Activated CD4-positive, alpha-beta memory T cell treated with anti-CD3 and anti-CD28 coated beads for 36 hours (primary cell): ENCODE measurements at regions of chr11 and their contacts with region 1.

Region 1: DNA sequence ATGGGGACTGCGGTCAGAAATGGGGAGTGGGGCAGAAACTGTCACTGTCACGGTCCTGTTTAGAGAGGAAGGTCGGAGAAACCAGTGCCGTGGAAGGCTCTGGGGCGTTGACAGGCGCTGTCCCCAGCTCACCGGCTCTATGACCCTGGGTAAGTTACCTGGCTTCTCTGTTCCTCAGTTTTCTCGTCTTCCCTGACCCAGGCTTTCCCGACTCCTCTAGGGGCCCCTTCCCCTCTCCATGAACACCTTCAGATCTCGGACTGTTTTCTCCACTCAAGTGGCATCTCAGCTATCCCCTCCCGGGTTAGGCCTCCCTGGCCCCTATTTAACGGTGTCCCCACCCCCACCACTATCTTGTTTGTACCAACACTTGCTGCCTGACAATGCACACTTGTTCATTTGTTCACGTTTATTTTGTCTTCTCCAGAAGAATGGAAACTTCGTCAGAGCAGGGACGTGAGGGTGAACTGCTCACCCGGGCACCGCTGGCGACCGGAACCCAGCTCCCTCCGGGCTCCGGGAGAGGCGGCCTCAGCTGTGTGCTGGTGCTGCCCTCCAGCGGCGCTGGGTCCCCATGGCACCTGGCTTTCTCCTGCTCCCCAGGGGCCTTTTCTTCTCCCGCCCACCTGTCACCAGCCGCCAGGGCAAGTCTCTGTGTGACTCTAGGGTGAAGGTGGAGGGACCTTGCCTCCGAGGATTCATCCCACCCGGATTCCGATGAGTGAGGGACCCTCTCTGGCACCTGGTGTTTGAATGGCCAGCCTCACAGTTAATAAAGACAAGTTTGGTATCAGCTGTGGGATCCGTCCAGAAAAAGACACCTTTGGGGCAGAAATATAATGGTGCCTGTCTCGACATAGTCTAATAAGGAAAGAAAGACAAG is 33.1 kb upstream of the SLC35C1 start:
- DNase-seq: peak; percentile 92
- H3K4me3 Mint-ChIP-seq: peak overlapping the region; percentile 86
- H3K27ac Mint-ChIP-seq: peak overlapping the region; percentile 35
- H3K4me1 Mint-ChIP-seq: peaks cover 24% of the 10 kb centered on the region
- H3K27me3 Mint-ChIP-seq: no peaks in the 10 kb centered on the region

Region 2: GRCh38 chr11:44936525-44936924 is 835.3 kb before region 1 on chr11:
- CTCF ChIA-PET with region 1: no interaction called
- POLR2A ChIA-PET with region 1: no interaction called
- intact Hi-C with region 1: loop called (anchors 10 kb)
- DNase-seq: peak; percentile 89
- H3K4me3 Mint-ChIP-seq: no peak overlapping the region
- H3K27ac Mint-ChIP-seq: no peak overlapping the region
- H3K4me1 Mint-ChIP-seq: no peaks in the 10 kb centered on the region
- H3K27me3 Mint-ChIP-seq: no peaks in the 10 kb centered on the region

Region 3: GRCh38 chr11:45371251-45372115 is 400.3 kb before region 1 on chr11:
- CTCF ChIA-PET with region 1: interaction called, 78 read pairs
- POLR2A ChIA-PET with region 1: no interaction called
- intact Hi-C with region 1: loop called (anchors 1 kb)
- DNase-seq: peak; percentile 81
- H3K4me3 Mint-ChIP-seq: no peak overlapping the region
- H3K27ac Mint-ChIP-seq: no peak overlapping the region
- H3K4me1 Mint-ChIP-seq: peaks cover 21% of the 10 kb centered on the region
- H3K27me3 Mint-ChIP-seq: peaks cover 3% of the 10 kb centered on the region

Region 4: GRCh38 chr11:45736424-45736823 is 35.4 kb before region 1 on chr11:
- CTCF ChIA-PET with region 1: interaction called, 6 read pairs
- POLR2A ChIA-PET with region 1: no interaction called
- intact Hi-C with region 1: loop called (anchors 2 kb)
- DNase-seq: no peak
- H3K4me3 Mint-ChIP-seq: no peak overlapping the region
- H3K27ac Mint-ChIP-seq: no peak overlapping the region
- H3K4me1 Mint-ChIP-seq: peaks cover 7% of the 10 kb centered on the region
- H3K27me3 Mint-ChIP-seq: peaks cover 5% of the 10 kb centered on the region

Region 5: GRCh38 chr11:45804761-45805304 is 33.0 kb after region 1 on chr11 and contains the start of gene SLC35C1:
- CTCF ChIA-PET with region 1: interaction called, 49 read pairs
- POLR2A ChIA-PET with region 1: no interaction called
- intact Hi-C with region 1: loop called (anchors 1 kb)
- DNase-seq: peak; percentile 97
- H3K4me3 Mint-ChIP-seq: peak within 1 kb of the TSS; percentile 90
- H3K27ac Mint-ChIP-seq: peak within 1 kb of the TSS; percentile 86
- H3K4me1 Mint-ChIP-seq: peaks cover 42% of the 10 kb centered on the region
- H3K27me3 Mint-ChIP-seq: no peaks in the 10 kb centered on the region
- total RNA-seq, gene SLC35C1: 10.7 to 11.4 TPM

Region 6: DNA sequence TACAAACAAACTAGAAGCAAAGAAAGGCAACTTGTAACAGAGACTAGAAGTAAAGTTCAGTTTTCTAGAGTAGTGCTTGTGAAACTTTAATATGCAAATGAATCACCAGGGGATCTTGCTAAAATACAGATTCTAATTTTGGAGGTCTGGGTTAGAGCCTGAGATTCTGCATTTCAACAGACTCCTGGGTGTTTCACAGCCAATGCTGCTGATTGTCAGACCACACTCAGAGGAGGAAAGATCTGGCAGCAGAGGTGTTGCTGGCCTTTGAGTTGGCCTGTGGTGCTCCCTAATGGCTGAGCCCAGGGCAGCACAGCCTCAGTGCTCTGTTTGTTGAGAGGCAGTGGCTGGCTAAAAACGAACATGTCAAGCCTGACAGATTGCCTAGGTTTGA is 80.9 kb after region 1 on chr11:
- CTCF ChIA-PET with region 1: no interaction called
- POLR2A ChIA-PET with region 1: no interaction called
- intact Hi-C with region 1: no loop called
- DNase-seq: no peak
- H3K4me3 Mint-ChIP-seq: no peak overlapping the region
- H3K27ac Mint-ChIP-seq: no peak overlapping the region
- H3K4me1 Mint-ChIP-seq: peaks cover 38% of the 10 kb centered on the region
- H3K27me3 Mint-ChIP-seq: no peaks in the 10 kb centered on the region

Region 7: DNA sequence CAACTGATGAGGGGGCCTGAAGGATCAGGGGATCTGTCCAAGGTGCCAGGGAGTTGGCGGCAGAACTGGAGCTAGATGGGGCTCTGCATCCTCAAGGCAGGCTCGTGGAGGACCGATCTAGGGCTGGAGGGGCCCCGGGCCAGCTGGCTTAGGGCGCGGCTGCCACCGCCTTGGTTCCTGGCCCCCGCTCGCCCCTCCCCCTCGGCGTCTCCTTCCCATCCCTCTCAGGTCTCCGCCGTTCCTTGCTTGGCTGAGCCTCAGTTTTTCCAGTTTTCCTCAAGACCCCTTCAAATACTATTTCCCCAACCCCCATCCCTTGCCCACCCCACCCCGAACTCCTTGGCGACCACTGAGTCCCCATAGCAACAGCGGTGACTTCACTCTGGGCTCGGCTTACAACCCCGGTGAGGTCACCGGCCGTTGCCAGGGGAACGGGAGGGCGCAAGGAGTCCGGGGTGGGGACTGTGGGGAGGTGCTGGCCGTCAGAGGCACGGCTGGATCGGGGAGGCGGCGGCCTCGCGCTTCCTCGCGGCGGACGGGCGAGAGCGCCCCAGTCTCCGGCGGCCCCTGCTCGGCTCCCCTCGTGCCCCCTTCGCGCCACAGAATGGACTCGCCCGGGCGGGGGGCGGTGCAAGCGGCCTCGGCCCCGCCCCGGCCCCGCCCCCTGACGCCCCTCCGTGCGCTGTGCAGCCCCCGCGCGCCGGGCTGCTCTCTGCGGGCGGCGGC is 127.8 kb after region 1 on chr11:
- CTCF ChIA-PET with region 1: no interaction called
- POLR2A ChIA-PET with region 1: no interaction called
- intact Hi-C with region 1: no loop called
- DNase-seq: peak; percentile 75
- H3K4me3 Mint-ChIP-seq: peak overlapping the region; percentile 37
- H3K27ac Mint-ChIP-seq: no peak overlapping the region
- H3K4me1 Mint-ChIP-seq: no peaks in the 10 kb centered on the region
- H3K27me3 Mint-ChIP-seq: peaks cover 18% of the 10 kb centered on the region

Region 8: GRCh38 chr11:46006418-46007070 is 234.7 kb after region 1 on chr11:
- CTCF ChIA-PET with region 1: interaction called, 8 read pairs
- POLR2A ChIA-PET with region 1: no interaction called
- intact Hi-C with region 1: loop called (anchors 2 kb)
- DNase-seq: no peak
- H3K4me3 Mint-ChIP-seq: no peak overlapping the region
- H3K27ac Mint-ChIP-seq: no peak overlapping the region
- H3K4me1 Mint-ChIP-seq: peaks cover 2% of the 10 kb centered on the region
- H3K27me3 Mint-ChIP-seq: no peaks in the 10 kb centered on the region

Region 9: GRCh38 chr11:46120361-46121300 is 348.8 kb after region 1 on chr11:
- CTCF ChIA-PET with region 1: no interaction called
- POLR2A ChIA-PET with region 1: no interaction called
- intact Hi-C with region 1: no loop called
- DNase-seq: peak; percentile 30
- H3K4me3 Mint-ChIP-seq: peak overlapping the region; percentile 88
- H3K27ac Mint-ChIP-seq: peak overlapping the region; percentile 94
- H3K4me1 Mint-ChIP-seq: peaks cover 41% of the 10 kb centered on the region
- H3K27me3 Mint-ChIP-seq: no peaks in the 10 kb centered on the region